GM12878 (cell line): ENCODE measurements at regions of chr5 and their contacts with region 1.

Region 1: GRCh38 chr5:180868960-180869359 is 7.9 kb upstream of the ZFP62 start:
- DNase-seq: peak; percentile 61
- ATAC-seq: peak; percentile 80
- H3K4me3 ChIP-seq: no peak overlapping the region
- H3K27ac ChIP-seq: peak overlapping the region; percentile 32; the same call in 1 of the 2 replicates
- H3K4me1 ChIP-seq: peaks cover 17% of the 10 kb centered on the region
- H3K27me3 ChIP-seq: no peaks in the 10 kb centered on the region
- CTCF ChIP-seq: peak; percentile 73 to 86 (median 81)
- EP300 ChIP-seq: no peak
- POLR2A ChIP-seq: no peak
- RAD21 ChIP-seq: peak; percentile 83

Region 2: GRCh38 chr5:180784497-180785097 is 84.4 kb before region 1 on chr5:
- CTCF ChIA-PET with region 1: interaction called, 50 read pairs
- POLR2A ChIA-PET with region 1: no interaction called
- RAD21 ChIA-PET with region 1: interaction called, 7 read pairs
- SMC1A ChIA-PET with region 1: interaction called, 10 read pairs
- in situ Hi-C with region 1: no loop called
- intact Hi-C with region 1: loop called (anchors 2 kb)
- DNase-seq: no peak
- ATAC-seq: peak; percentile 96
- H3K4me3 ChIP-seq: no peak overlapping the region
- H3K27ac ChIP-seq: no peak overlapping the region
- H3K4me1 ChIP-seq: no peaks in the 10 kb centered on the region
- H3K27me3 ChIP-seq: no peaks in the 10 kb centered on the region
- CTCF ChIP-seq: peak; percentile 78 to 95 (median 78); a peak in 5 of 6 replicates
- EP300 ChIP-seq: no peak
- POLR2A ChIP-seq: no peak
- RAD21 ChIP-seq: peak; percentile 94

Region 3: DNA sequence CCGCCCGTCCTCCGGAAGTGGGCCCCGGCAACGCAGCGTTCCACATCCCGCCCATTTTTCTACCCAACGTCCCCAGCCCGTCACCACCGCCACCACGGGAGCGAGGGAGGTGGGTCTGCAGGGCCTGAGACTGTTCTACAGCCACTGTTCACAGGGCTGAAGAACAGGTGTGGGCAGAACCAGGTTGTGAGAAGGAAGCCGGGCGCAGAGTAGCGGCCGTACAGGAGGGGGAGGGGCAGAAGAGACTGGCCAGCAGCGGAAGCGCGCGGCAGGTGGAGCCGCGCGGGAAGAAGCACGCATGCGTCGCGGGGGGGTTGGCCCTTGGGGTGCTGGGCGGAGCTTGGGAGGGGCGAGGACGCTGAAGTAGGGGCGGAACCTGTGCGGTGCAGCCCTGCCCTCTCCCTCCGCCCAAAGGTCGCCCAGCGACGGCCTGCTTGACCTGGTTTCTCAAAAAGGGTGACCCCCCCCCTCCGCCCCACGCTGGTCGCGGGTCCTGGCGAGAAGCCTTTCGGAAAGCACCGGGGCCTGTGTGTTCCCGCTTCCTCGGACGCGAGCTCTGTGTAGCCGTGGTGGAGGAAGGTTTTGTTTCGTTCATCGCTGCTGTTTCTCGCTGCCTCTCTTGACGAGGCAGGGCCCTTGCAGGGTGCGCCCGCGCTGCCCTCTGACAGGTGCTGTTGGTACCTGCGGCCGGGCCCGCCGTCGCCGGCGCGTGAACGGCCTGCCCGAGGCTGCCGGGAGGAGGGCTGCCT is 58.6 kb before region 1 on chr5:
- CTCF ChIA-PET with region 1: interaction called, 7 read pairs
- POLR2A ChIA-PET with region 1: interaction called, 3 read pairs
- RAD21 ChIA-PET with region 1: interaction called, 3 read pairs
- SMC1A ChIA-PET with region 1: interaction called, 13 read pairs
- in situ Hi-C with region 1: no loop called
- intact Hi-C with region 1: no loop called
- DNase-seq: peak; percentile 88
- ATAC-seq: peak; percentile 83
- H3K4me3 ChIP-seq: peak overlapping the region; percentile 97
- H3K27ac ChIP-seq: peak overlapping the region; percentile 95
- H3K4me1 ChIP-seq: peaks cover 31% of the 10 kb centered on the region
- H3K27me3 ChIP-seq: no peaks in the 10 kb centered on the region
- CTCF ChIP-seq: no peak
- EP300 ChIP-seq: no peak
- POLR2A ChIP-seq: peak; percentile 94
- RAD21 ChIP-seq: no peak

Region 4: DNA sequence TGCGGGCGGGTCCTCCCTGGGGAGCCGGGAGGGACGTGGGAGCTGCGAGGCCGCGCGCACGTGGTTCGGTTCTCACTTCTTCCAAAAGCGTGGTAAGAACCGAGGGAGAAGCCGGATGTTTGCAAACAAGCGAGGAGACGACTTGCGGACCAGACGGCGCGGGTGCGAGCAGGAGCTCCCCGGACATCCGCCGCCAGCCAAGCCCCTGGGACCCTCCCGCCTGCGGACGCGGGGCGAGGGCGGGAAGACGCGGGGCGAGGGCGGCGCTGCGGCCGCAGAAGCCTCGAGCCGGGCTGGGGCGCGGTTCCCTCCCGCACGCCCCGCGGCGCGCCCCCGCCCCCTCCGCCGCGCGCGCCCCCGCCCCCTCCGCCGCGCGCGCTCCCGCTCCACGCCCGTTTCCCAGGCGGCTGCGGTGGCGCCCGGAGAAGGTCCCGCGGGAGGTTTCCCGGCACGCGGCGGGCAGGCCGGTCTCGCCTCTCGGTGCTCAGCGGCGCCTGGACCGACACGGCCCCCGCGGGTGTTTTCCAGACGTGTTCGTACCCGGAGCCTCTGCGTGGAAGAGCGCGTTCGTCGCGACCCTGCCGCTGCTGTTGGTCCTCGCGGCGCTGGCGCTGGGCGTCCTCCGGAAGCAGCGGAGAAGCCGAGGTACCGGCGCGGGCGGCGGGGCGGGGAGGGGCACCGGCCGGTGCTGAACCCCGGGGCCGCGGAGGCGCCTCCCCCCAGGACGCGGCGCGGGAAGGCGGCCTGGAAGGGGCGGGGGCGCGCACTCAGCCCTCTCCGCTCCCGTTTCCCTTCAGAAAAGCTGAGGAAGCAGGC is 183.9 kb after region 1 on chr5:
- CTCF ChIA-PET with region 1: interaction called, 4 read pairs
- POLR2A ChIA-PET with region 1: no interaction called
- RAD21 ChIA-PET with region 1: interaction called, 7 read pairs
- SMC1A ChIA-PET with region 1: interaction called, 6 read pairs
- in situ Hi-C with region 1: no loop called
- intact Hi-C with region 1: loop called (anchors 5 kb)
- DNase-seq: no peak
- ATAC-seq: no peak
- H3K4me3 ChIP-seq: peak overlapping the region; percentile 57; the same call in 1 of the 2 replicates
- H3K27ac ChIP-seq: no peak overlapping the region
- H3K4me1 ChIP-seq: peaks cover 12% of the 10 kb centered on the region
- H3K27me3 ChIP-seq: peaks cover 5 to 7% of the 10 kb centered on the region in 2 experiments
- CTCF ChIP-seq: no peak
- EP300 ChIP-seq: no peak
- POLR2A ChIP-seq: no peak
- RAD21 ChIP-seq: no peak

Region 5: DNA sequence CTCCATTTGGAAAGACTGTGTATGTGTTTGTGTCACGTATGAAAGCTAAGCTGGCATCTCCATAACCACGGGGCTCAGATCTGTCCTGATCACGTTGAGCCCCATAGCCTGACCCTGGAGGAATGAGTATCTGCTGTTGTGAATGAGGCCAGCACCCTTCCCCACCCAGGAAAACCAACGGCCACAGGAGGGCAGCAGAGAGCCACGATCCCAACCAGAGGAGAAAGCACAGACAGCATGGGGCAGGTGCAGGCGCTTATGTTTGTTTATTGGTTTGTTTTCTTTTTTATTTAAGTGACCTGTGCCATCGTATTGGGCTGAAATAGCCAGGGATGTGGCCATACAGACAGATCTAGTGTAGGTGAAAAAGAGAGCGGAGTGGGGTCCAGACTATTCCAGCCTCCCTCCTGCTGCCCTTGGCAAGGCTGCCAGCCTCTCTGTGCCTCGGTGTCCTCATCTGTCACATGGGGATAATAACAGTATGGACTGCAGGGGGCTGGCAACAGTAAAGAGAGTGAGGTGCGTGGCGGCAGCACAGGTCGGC is 290.4 kb after region 1 on chr5:
- CTCF ChIA-PET with region 1: interaction called, 8 read pairs
- POLR2A ChIA-PET with region 1: no interaction called
- RAD21 ChIA-PET with region 1: interaction called, 8 read pairs
- SMC1A ChIA-PET with region 1: interaction called, 12 read pairs
- in situ Hi-C with region 1: no loop called
- intact Hi-C with region 1: loop called (anchors 2 kb)
- DNase-seq: no peak
- ATAC-seq: peak; percentile 89
- H3K4me3 ChIP-seq: no peak overlapping the region
- H3K27ac ChIP-seq: no peak overlapping the region
- H3K4me1 ChIP-seq: peaks cover 25% of the 10 kb centered on the region
- H3K27me3 ChIP-seq: no peaks in the 10 kb centered on the region
- CTCF ChIP-seq: peak; percentile 86 to 97 (median 88)
- EP300 ChIP-seq: no peak
- POLR2A ChIP-seq: no peak
- RAD21 ChIP-seq: peak; percentile 95